Psoas muscle (tissue), 8 donors: ENCODE measurements at regions of chr1 and their contacts with region 1.

Region 1: DNA sequence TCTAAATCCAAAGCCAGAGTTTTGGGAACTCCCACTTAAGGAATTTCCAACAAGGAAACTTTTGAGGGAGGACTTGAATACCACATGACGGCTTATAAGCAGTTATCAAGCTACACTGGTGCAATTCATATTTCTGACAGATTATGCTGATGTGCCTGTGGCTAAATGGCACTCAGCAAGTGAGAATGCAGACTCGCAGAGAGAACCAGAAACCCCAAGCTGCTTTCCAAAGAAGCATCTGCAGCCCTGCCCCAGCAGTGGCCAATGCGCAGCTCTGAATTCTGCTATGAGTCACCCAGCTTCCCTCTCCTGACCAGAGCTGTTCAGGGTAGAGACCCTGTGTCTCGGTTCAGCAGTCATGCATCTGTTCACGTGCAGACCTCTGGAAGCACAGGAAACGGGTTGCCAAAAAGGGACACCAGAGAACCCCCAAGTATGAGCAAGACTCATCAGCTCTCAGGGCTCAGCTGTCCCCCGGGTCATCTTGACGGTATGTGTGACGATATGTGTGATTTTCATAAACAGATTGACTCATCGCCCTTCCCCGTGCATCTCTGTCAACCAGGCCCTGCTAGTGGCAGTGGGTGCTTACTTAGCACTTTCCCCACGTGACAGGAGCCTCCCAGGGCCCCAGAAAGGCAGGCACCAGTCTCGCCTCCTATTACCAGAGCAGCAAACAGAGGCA is 76.3 kb downstream of the ITPKB start:
- DNase-seq: peak; percentile 85 to 91
- ATAC-seq: peak; percentile 82 to 91 (median 85)
- H3K4me3 ChIP-seq: peak overlapping the region; percentile 0
- H3K27ac ChIP-seq: peak overlapping the region; percentile 77
- H3K4me1 ChIP-seq: peaks cover 92% of the 10 kb centered on the region
- H3K27me3 ChIP-seq: no peaks in the 10 kb centered on the region
- CTCF ChIP-seq: no peak

Region 2: DNA sequence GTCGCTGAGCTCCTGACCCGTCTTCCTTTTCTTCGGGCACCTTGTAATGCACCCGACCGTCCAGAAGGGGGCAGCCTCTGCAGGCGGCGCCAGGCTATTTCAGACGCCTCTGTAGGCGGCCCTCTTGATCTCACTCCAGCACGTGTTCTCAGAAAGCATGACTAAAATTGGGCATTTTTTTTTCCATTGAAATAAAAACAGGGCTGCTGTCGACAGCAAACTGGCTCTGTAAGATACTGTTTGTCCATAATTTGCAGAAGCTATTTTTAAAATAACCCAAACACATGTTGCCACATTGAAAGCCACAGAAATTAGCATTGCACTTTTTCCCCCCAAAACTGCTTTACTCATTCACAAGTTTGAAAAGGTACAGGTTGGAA is 36.2 kb before region 1 on chr1:
- intact Hi-C with region 1: no loop called
- DNase-seq: peak; percentile 73 to 88
- ATAC-seq: peak; percentile 85 to 94 (median 90)
- H3K4me3 ChIP-seq: no peak overlapping the region
- H3K27ac ChIP-seq: no peak overlapping the region
- H3K4me1 ChIP-seq: peaks cover 5% of the 10 kb centered on the region
- H3K27me3 ChIP-seq: no peaks in the 10 kb centered on the region
- CTCF ChIP-seq: peak; percentile 92

Region 3: DNA sequence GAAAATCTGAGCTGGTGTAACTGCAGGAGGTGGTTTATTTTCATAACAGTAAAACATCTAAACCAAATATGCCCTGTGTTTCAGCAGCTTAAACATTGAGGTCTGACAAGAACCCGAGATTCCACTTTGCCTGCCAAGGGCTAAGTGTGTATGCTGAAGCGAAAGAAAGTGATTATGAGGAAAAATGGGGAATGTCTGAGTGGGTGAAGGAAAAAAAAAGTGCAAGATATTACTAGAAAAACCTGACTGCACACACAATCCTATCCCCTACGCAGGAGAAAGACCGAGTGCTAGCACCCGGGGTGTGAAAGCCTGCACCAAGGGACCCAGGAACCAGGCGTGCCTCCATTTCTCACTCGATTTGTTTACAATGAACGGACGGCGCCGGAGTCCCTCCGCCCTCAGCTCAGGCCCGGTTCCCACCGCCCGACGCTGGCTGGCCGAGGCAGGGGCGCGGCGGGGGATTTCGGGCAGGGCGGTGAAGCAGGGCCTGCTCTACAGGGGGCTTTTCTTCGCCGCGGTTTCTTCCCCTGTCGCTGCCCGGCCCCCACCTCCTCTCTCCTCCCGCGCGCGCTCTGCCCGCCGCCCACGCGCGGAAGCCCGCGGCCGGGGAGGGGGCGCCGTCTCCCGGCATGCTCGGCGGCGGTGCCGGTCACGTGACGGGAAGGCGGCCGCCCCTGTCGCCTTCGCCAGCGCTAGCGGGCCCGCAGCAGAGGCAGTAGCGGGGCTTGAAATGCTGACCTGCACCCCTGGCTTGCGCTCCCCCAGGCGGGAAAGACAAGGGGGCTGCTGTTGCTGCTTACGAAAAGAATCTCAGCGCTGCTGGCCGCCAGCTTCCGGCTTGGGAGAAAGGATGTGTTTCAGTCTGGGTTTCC is 40.4 kb after region 1 on chr1:
- intact Hi-C with region 1: loop called (anchors 2 to 5 kb)
- DNase-seq: peak; percentile 81 to 88
- ATAC-seq: peak; percentile 82 to 88 (median 87)
- H3K4me3 ChIP-seq: peak overlapping the region; percentile 84
- H3K27ac ChIP-seq: peak overlapping the region; percentile 99
- H3K4me1 ChIP-seq: peaks cover 42% of the 10 kb centered on the region
- H3K27me3 ChIP-seq: no peaks in the 10 kb centered on the region
- CTCF ChIP-seq: no peak

Region 4: DNA sequence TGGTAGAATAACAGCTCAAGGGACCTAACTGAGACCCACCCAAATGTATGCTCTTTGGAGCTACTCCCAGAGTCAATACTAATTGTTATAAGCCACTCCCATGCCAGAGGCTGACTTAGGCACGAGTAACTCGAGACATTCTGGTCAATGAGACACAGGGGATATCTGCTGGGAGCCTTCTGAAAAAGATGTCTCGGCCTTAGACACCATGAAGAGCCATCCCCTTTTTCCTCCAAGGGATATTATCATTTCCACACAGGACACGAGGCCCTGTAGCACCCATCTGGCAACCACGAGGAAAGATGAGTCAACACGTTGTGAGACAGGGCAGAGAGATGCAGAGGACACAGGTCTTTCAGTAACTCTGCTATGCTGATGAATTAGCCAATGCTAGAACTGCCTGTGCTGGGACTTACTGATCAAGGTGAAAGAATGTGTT is 45.6 kb after region 1 on chr1:
- intact Hi-C with region 1: loop called (anchors 2 to 5 kb)
- DNase-seq: no peak
- ATAC-seq: peak; percentile 51 to 89 (median 86)
- H3K4me3 ChIP-seq: no peak overlapping the region
- H3K27ac ChIP-seq: peak overlapping the region; percentile 23
- H3K4me1 ChIP-seq: peaks cover 28% of the 10 kb centered on the region
- H3K27me3 ChIP-seq: no peaks in the 10 kb centered on the region
- CTCF ChIP-seq: no peak

Region 5: GRCh38 chr1:226736908-226737818 is 74.4 kb after region 1 on chr1:
- intact Hi-C with region 1: loop called in 1 of 2 experiments (anchors 5 kb)
- DNase-seq: peak; percentile 49 to 79
- ATAC-seq: peak; percentile 57 to 73 (median 64)
- H3K4me3 ChIP-seq: peak overlapping the region; percentile 94
- H3K27ac ChIP-seq: peak overlapping the region; percentile 87
- H3K4me1 ChIP-seq: peaks cover 23% of the 10 kb centered on the region
- H3K27me3 ChIP-seq: no peaks in the 10 kb centered on the region
- CTCF ChIP-seq: peak; percentile 16

Region 6: GRCh38 chr1:226814751-226815496 is 152.1 kb after region 1 on chr1:
- intact Hi-C with region 1: loop called in 1 of 2 experiments (anchors 2 kb)
- DNase-seq: peak; percentile 83 to 91
- ATAC-seq: peak; percentile 94 to 97 (median 95)
- H3K4me3 ChIP-seq: no peak overlapping the region
- H3K27ac ChIP-seq: peak overlapping the region; percentile 94
- H3K4me1 ChIP-seq: peaks cover 29% of the 10 kb centered on the region
- H3K27me3 ChIP-seq: no peaks in the 10 kb centered on the region
- CTCF ChIP-seq: no peak